PC-9 (cell line): ENCODE measurements at regions of chrX and their contacts with region 1.

Region 1: DNA sequence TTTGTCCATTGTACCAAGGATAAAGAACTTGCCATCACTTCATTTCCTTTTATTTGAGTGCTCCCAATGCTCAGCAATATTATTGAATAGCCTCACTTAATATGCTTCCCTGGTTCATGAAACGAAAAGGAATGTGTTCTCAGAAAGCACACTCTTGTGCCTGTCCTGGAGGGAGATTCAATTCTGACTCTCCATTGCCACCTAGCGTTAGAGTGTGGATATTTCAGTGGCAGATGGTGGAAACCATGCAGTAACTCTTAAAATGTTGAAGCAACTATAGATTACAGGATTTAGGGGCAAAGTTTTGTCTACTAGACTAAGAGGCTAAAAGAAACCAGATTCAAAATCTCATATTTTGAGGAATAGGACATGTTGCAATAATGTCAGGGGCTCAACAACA is 36.0 kb downstream of the GAB3 start:
- DNase-seq: peak in 1 of 2 experiments; percentile 43
- H3K4me3 ChIP-seq: no peak overlapping the region
- H3K27ac ChIP-seq: no peak overlapping the region
- H3K4me1 ChIP-seq: peaks cover 21% of the 10 kb centered on the region; the same call in 1 of the 2 replicates
- H3K27me3 ChIP-seq: no peaks in the 10 kb centered on the region
- CTCF ChIP-seq: peak; percentile 85

Region 2: DNA sequence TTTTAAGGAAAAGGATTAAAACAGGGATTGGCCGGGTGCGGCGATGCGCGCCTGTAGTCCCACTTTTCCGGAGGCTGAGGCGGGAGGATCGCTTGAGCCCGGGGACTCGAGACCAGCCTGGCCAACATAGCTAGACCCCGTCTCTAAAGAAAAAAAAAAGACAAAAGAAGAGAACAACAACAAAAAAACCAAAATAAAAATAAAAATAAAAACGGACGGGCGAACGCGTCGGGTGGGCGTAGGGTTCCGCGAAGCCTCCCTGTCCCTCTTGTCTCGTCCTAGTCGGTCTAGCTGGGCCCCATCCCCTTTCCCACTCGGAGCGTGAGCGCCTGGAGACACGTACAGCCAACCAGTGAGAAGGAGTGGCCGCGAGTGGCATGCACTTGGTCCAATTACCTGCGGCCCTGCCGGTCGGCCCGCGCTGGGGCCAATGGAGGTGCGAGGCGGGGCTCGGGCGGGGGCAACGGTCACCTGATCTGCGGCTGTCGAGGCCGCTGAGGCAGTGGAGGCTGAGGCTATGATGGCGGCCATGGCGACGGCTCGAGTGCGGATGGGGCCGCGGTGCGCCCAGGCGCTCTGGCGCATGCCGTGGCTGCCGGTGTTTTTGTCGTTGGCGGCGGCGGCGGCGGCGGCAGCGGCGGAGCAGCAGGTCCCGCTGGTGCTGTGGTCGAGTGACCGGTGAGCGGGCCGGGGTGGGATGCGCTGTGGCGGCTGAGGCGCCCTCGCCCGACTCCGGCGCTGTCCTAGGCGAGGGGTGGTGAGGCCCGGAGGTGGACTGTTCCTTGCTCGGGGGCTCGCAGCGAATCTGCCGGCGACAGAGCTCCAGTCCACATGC is 286.5 kb before region 1 on chrX and contains the start of gene ATP6AP1:
- CTCF ChIA-PET with region 1: no interaction called
- POLR2A ChIA-PET with region 1: interaction called, 13 read pairs
- intact Hi-C with region 1: no loop called
- DNase-seq: peak; percentile 83 to 97
- H3K4me3 ChIP-seq: peak within 1 kb of the TSS; percentile 67
- H3K27ac ChIP-seq: no peak within 1 kb of the TSS
- H3K4me1 ChIP-seq: peaks cover 6% of the 10 kb centered on the region
- H3K27me3 ChIP-seq: no peaks in the 10 kb centered on the region
- CTCF ChIP-seq: no peak
- total RNA-seq, gene ATP6AP1: 112 and 119 TPM in 2 replicates

Region 3: DNA sequence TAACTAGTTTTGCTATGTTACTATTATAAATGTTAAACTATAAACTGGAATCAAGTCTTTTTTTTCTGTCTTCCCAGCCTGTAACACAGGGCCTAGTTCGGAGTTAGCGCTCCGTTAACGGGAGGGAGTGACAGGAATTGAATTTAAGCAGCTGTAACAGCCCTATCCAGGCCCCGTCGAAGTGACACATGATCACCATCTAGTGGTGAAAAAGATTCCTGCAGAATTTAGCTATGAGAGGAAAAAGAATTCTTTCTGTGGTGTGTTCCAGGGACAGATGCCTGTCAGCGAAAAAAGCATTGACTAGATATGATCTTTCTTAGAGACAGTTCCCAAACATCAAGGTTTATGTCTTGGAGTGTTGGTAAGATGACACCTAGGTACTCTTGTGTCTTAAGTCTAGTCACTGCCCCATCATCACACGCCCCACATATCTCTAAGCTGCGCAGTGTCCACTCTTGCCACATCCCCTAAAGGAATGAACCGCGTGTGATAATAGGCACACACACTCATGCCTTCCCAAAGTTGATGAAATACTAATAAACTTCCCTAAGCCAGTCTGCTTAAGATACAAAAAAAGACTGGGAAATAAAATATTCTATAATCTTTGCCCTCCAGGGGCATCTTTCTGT is 33.9 kb after region 1 on chrX:
- CTCF ChIA-PET with region 1: no interaction called
- POLR2A ChIA-PET with region 1: no interaction called
- intact Hi-C with region 1: loop called (anchors 2 kb)
- DNase-seq: peak in 1 of 2 experiments; percentile 47
- H3K4me3 ChIP-seq: no peak overlapping the region
- H3K27ac ChIP-seq: no peak overlapping the region
- H3K4me1 ChIP-seq: peaks cover 3% of the 10 kb centered on the region; the same call in 1 of the 2 replicates
- H3K27me3 ChIP-seq: peaks cover 26% of the 10 kb centered on the region
- CTCF ChIP-seq: peak; percentile 79

Region 4: DNA sequence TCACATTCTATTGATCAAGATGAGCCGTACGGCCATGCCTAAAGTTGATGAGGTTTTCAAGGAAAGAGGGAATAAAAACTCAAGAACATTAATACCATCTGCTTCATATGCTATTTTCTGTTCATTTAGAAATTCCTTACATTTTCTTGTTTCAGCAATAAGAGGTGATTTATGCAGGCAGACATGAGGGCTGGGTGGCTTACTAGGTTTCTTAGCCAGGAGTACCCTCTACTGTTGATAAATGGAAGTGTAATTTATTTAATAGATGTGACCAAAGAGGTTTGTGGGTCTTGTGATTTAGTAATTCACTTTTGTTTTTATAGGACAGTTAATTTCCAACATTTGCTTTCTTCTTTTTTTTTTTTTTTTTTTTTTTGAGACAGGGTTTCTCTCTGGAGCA is 125.9 kb after region 1 on chrX:
- CTCF ChIA-PET with region 1: no interaction called
- POLR2A ChIA-PET with region 1: no interaction called
- intact Hi-C with region 1: loop called (anchors 2 kb)
- DNase-seq: peak; percentile 0 to 42
- H3K4me3 ChIP-seq: no peak overlapping the region
- H3K27ac ChIP-seq: no peak overlapping the region
- H3K4me1 ChIP-seq: no peaks in the 10 kb centered on the region
- H3K27me3 ChIP-seq: no peaks in the 10 kb centered on the region
- CTCF ChIP-seq: peak; percentile 78